ENCODE measurements at regions of chr20 and their contacts with region 1.

Region 1: DNA sequence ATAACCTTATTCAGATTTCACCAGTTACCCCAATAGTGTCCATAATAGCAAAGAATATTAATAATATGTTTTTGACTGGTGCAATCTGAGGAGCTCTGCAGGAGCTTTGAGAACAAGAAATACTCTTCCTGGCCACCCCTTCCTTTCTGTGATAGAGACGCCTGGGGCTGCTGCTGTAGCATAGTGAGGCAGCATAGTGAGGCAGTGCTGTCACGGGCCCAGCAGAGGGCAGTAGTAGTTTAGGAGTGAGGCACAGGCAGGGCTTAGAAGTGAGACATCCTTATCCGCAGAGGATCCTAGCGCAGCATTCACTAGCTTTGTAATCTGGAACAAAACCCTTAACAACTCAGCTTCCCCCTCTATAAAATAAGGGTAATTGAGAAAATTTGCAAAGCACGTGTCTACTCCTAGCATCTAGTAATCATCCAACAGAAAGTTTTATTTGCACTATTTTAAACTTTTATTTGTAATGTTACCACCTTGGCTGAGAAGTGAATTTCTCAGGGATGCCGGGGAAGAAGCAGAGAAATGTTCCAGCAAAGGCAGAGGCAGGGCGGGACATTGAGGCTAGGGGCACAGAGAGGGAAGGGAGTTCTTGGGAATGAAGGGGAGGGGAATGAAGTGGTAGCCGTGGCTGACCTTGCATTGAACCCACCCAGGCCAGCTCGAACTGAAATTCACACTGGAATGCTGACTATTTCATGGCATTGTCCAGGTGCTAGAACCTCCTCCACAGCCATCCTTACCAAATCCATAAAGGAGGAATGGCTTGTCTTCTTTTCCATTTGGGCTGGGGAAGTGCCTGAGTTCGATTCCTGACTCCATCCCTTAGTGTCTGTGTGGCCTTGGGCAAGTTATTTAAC is 78.8 kb downstream of the CDS2 start:
- DNase-seq: peak; percentile 74 to 91 (median 84)
- H3K4me3 ChIP-seq: no peak overlapping the region
- H3K27ac ChIP-seq: peak overlapping the region in 9 of 59 donors; percentile 0 to 55 (median 29)
- H3K27me3 ChIP-seq: no peaks in the 10 kb centered on the region
- CTCF ChIP-seq: peak; percentile 78 to 98 (median 95)

Region 2: DNA sequence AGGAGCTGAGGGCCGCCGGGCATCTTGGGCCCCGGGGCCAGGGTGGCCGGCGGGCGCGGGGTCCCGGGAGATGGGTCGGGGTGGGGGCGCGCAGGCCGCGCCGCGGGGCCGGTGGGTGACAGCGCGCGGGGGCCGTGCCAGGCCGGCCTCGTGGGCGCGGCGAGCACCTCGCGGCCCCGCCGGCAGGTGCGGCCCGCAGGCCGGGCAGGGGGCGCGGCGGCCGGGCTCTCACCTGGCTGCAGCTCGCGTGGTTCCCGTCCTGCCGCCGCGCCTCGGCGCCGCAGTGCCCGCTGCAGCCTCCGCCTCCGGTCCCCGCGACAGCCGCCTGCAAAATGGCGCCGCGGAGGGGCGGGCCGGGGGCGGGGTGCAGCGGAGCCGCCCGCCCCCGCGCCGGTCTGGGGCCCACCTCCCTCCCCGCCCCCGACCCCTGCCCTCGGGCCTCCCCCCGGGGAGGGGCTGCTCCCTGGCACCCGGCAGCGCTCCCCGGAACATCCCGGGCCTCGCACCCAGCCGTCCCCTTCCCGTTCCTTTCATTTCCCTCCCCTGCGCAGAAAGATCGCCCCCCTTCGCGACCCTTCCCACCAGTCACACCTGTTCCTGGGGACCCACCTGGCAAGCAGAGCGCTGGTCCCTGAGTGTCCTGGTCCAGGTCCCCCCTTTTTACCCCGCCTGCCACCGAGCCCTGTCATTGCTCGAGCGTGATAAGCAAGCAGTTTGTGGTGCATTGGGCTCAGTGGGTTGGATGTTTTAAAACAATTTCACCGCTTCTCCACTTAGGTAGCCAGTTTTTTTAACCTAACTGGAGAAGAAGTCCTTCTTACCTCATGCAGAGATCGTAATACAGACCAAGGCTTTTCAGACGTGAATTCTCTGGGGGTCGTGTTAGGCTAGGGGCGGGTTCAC is 204.2 kb before region 1 on chr20 and contains the start of gene SLC23A2:
- intact Hi-C with region 1: no loop called
- DNase-seq: peak in 6 of 10 donors; percentile 21 to 66 (median 46)
- H3K4me3 ChIP-seq: peak within 1 kb of the TSS; percentile 69 to 98 (median 89)
- H3K27ac ChIP-seq: peak within 1 kb of the TSS in 57 of 59 donors; percentile 3 to 90 (median 77)
- H3K27me3 ChIP-seq: no peaks in the 10 kb centered on the region
- CTCF ChIP-seq: no peak
- total RNA-seq, gene SLC23A2: 55.9 to 110 (median 87.7) TPM

Region 3: DNA sequence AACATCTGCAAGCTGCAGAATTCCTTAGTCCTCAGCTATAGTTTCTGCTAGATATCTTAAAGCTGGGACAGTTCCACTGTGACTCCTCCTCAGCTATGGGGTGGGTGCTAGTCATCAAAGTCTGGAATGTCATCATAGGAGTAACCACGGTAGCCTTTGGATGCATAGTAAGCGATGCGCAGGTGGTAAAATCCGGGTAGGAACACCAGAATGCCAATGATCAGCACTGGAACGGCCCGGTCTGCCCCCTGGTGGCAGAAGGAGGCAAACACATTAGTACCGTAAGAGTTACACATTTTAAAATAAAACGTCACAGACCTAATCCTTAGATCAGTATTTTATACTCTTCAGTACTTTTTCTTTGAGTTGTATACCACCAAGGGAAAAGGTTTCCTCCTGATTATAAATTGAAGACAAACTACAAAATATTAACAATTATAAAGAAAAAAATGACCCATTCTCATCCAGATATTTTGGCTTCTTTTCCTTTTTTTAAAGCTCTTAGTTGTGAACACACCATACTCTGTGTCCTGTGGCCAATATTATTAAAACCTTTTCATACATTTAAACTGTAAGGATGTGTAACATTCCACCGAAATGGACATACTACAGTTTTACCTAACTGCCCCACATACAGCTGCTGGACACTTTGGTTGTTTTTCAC is 104.8 kb before region 1 on chr20:
- intact Hi-C with region 1: no loop called
- DNase-seq: peak; percentile 76 to 92 (median 84)
- H3K4me3 ChIP-seq: no peak overlapping the region
- H3K27ac ChIP-seq: peak overlapping the region in 35 of 59 donors; percentile 2 to 73 (median 32)
- H3K27me3 ChIP-seq: no peaks in the 10 kb centered on the region
- CTCF ChIP-seq: peak; percentile 79 to 99 (median 93)

Region 4: DNA sequence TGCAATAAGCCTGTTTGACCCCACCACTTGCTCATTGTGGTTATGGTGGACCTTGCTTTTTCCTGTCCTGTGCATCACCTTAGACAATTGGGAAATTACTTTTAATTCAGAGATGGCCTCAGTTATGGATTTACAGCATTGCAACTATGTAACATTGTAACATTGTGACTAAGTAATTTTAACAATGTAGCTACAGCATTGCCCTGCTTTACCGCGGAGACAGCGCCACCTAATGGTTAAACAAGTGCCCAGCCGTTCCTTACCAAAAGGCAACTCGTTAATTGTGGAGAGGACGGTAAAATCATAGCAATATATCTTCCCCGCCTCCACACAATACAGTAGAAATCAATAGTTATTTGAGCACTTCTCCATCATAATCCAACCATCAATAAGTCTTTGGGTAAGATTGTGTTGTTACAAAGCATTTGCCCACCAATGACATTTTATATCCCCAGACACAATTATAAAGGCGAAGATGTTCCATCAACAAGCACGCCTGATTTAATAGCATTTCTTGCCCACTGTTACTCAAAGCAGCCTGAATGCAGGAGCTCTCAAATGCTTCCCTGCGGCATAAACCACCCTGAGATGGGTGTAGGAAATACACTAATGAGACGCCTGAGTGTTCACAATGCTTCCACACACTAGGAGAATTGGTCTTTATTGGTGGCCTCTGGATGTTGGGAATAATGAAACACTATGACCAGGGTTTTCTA is 17.5 kb after region 1 on chr20:
- intact Hi-C with region 1: loop called in 1 of 2 experiments (anchors 1 kb)
- DNase-seq: peak in 9 of 10 donors; percentile 30 to 81 (median 72)
- H3K4me3 ChIP-seq: no peak overlapping the region
- H3K27ac ChIP-seq: peak overlapping the region in 6 of 59 donors; percentile 39 to 51 (median 44)
- H3K27me3 ChIP-seq: no peaks in the 10 kb centered on the region
- CTCF ChIP-seq: peak; percentile 69 to 94 (median 88)

Region 5: GRCh38 chr20:5234158-5234557 is 28.6 kb after region 1 on chr20:
- intact Hi-C with region 1: no loop called
- DNase-seq: no peak
- H3K4me3 ChIP-seq: no peak overlapping the region
- H3K27ac ChIP-seq: no peak overlapping the region
- H3K27me3 ChIP-seq: no peaks in the 10 kb centered on the region
- CTCF ChIP-seq: no peak